Posterior vena cava (tissue), 2 donors: ENCODE measurements at regions of chrX and their contacts with region 1.

Region 1: GRCh38 chrX:77719388-77719787 is 66.6 kb downstream of the ATRX start:
- DNase-seq: no peak

Region 2: DNA sequence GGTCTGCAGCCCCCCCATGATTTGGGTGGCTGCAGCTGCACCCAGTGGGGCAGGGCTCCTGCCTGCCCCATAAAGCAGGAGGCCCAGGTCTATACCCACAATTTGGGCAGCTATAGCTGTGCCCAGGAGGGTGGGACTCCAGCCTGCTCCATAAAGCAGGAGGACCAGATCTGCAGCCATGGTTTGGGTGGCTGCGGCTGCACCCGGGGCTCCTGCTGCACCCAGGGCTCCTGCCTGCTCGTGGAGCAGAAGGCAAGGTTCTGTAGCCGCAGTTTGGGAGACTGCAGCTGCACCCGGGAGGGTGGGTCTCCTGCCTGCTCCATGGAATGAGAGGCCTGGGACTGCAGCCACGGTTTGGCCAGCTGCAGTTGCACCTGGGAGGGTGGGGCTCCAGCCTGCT is 14.5 kb before region 1 on chrX:
- intact Hi-C with region 1: loop called in 1 of 2 experiments (anchors 1 kb)
- DNase-seq: no peak

Region 3: GRCh38 chrX:78066110-78066509 is 346.7 kb after region 1 on chrX:
- intact Hi-C with region 1: no loop called
- DNase-seq: no peak